HepG2 (cell line): ENCODE measurements at regions of chr10 and their contacts with region 1.

Region 1: GRCh38 chr10:6667679-6668270 is 87.7 kb upstream of the PRKCQ start:
- DNase-seq: peak; percentile 18
- ATAC-seq: peak; percentile 57
- H3K4me3 ChIP-seq: no peak overlapping the region
- H3K27ac ChIP-seq: no peak overlapping the region
- H3K4me1 ChIP-seq: no peaks in the 10 kb centered on the region
- H3K27me3 ChIP-seq: peaks cover 0 to 5% of the 10 kb centered on the region in 2 experiments; a peak in 2 of 5 replicates
- CTCF ChIP-seq: peak; percentile 56
- EP300 ChIP-seq: no peak
- POLR2A ChIP-seq: no peak
- RAD21 ChIP-seq: no peak

Region 2: GRCh38 chr10:6033954-6034353 is 633.8 kb before region 1 on chr10:
- CTCF ChIA-PET with region 1: no interaction called
- POLR2A ChIA-PET with region 1: no interaction called
- in situ Hi-C with region 1: no loop called
- intact Hi-C with region 1: no loop called
- DNase-seq: no peak
- ATAC-seq: no peak
- H3K4me3 ChIP-seq: no peak overlapping the region
- H3K27ac ChIP-seq: no peak overlapping the region
- H3K4me1 ChIP-seq: no peaks in the 10 kb centered on the region
- H3K27me3 ChIP-seq: peaks cover 0 to 28% of the 10 kb centered on the region in 2 experiments; a peak in 4 of 5 replicates
- CTCF ChIP-seq: no peak
- EP300 ChIP-seq: no peak
- POLR2A ChIP-seq: no peak
- RAD21 ChIP-seq: no peak

Region 3: DNA sequence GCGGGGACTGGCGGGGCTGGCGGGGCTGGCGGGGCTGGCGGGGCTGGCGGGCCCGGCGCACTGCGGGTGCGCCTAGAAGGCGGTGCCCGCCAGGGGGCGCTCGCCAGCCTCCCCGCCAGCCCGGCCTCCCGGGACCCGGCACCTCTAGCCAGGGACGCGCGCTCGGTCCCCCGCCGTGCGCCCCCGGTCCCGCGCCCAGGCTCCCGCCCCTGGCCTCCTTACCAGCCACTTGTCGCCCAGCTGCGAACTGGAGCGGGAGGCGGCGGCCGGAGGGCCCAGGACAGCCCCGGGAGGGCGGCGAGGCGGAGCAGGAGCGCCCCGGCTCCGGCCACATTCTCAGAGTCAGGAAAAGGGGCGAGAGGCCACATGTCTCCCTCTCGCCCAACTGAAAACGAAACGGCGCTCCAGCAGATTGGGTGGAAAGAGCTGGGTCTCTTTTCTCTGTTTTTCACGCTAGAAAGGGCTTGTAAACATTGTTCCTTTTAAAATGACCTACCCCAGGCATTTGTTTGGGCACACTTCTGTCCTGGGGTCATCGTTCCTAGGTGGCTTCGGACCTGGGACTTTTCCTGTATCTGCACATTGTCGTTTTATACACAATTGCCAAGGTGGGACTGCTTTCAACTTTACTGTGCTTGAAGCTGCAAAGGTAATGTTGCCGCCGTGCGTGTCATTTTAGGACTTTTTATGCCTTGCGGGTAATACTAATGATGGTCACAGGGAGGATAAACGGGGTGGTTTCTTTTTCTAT is 87.3 kb before region 1 on chr10:
- CTCF ChIA-PET with region 1: no interaction called
- POLR2A ChIA-PET with region 1: no interaction called
- in situ Hi-C with region 1: no loop called
- intact Hi-C with region 1: loop called (anchors 1 kb)
- DNase-seq: peak; percentile 53
- ATAC-seq: peak; percentile 97
- H3K4me3 ChIP-seq: peak overlapping the region; percentile 57 to 80 (median 76)
- H3K27ac ChIP-seq: peak overlapping the region; percentile 54
- H3K4me1 ChIP-seq: peaks cover 18% of the 10 kb centered on the region; the same call in 1 of the 2 replicates
- H3K27me3 ChIP-seq: peaks cover 2 to 24% of the 10 kb centered on the region in 2 experiments; a peak in 3 of 5 replicates
- CTCF ChIP-seq: peak; percentile 53; the same call in 1 of the 2 replicates
- EP300 ChIP-seq: no peak
- POLR2A ChIP-seq: peak; percentile 22 to 42; a peak in 2 of 4 replicates
- RAD21 ChIP-seq: peak; percentile 54; the same call in 1 of the 2 replicates

Region 4: DNA sequence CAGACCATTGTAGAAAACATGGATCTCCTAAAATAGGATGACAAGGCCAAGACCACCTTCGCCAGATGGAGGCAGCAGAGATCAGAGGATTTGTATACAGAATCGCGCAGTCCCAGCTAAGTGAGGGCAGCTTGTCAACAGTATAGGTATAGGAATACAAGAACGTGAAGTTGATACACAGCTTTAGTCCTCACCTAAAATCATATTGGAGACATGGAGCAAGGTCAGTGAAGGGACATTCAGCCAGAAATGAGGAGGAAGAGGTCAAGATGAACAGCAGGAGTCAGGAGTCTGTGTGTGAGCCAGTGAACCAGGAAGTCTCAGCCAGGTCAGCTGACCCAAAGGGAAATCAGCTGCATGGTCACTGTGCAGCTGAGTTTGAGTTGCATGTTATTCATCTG is 175.7 kb after region 1 on chr10:
- CTCF ChIA-PET with region 1: no interaction called
- POLR2A ChIA-PET with region 1: no interaction called
- in situ Hi-C with region 1: no loop called
- intact Hi-C with region 1: no loop called
- DNase-seq: no peak
- ATAC-seq: peak; percentile 31; the same call in 1 of the 3 replicates
- H3K4me3 ChIP-seq: no peak overlapping the region
- H3K27ac ChIP-seq: no peak overlapping the region
- H3K4me1 ChIP-seq: no peaks in the 10 kb centered on the region
- H3K27me3 ChIP-seq: no peaks in the 10 kb centered on the region
- CTCF ChIP-seq: peak; percentile 22
- EP300 ChIP-seq: no peak
- POLR2A ChIP-seq: no peak
- RAD21 ChIP-seq: no peak